HepG2 (cell line): ENCODE measurements at regions of chr3 and their contacts with region 1.

Region 1: DNA sequence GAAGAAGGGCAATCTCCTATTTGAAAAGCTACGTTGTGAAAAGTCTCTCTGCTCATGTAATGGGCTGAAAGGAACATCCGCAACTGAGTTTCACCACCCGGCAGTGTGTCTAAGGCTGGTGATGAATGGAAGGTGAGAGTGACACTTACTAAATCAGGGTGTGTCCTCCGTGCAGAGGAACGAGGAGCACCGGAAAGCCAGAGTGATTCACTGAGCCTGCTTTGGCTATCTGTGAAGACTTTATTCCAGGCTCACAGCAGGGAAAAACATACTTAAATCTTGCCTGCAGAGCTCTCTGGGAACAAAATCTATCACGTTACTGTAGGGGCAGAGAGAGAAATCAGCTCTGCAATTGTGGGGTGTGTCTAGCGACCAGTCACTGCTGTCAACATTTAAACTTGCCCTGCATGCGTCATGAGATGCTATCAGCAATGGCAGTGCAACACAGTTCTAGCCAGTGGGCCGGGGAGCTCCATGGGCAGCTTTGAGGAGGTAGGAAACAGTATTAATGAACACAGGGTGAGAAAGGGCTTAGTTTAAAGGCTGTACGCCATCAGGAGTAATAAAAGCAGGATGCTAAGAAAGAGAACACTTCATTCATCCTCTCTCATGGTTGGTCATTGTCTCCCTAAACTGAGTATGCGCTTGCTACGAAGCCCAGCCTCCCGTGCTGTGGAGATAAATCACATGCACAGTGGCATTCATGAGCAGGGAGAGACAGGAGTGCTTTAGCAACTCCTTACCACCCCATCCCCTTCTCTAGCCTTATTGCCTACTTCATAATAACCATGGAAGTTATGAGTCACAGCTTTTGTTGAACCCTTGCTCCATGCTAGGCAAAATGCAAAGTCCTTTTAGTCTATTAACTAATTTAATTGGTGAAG is 542.7 kb upstream of the ADAMTS9 start:
- DNase-seq: no peak
- ATAC-seq: no peak
- H3K4me3 ChIP-seq: no peak overlapping the region
- H3K27ac ChIP-seq: no peak overlapping the region
- H3K4me1 ChIP-seq: no peaks in the 10 kb centered on the region
- H3K27me3 ChIP-seq: no peaks in the 10 kb centered on the region; a peak in 1 of 5 replicates
- CTCF ChIP-seq: no peak
- EP300 ChIP-seq: no peak
- POLR2A ChIP-seq: no peak
- RAD21 ChIP-seq: no peak

Region 2: DNA sequence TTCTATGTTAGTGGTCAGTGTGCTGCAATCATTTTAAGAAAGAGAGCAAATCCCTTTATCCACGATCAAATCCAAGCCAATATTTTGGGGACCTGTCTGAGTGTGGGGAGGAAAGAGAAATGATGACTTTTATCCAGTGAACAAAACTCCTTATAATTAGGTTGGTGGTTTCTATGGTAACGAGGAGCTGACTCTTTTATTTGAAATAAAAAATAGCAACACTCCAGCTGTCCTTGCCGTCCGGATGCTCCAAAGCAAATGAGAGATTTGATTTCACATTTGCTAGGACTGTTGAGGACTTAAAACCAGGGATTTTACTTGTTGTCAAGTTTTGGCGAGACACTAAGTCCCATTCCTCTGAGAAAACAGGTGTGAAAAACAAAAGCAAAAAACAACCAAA is 851.3 kb before region 1 on chr3:
- CTCF ChIA-PET with region 1: no interaction called
- POLR2A ChIA-PET with region 1: no interaction called
- in situ Hi-C with region 1: no loop called
- intact Hi-C with region 1: no loop called
- DNase-seq: no peak
- ATAC-seq: no peak
- H3K4me3 ChIP-seq: no peak overlapping the region
- H3K27ac ChIP-seq: no peak overlapping the region
- H3K4me1 ChIP-seq: no peaks in the 10 kb centered on the region
- H3K27me3 ChIP-seq: peaks cover 0 to 6% of the 10 kb centered on the region in 2 experiments; a peak in 2 of 5 replicates
- CTCF ChIP-seq: no peak
- EP300 ChIP-seq: no peak
- POLR2A ChIP-seq: no peak
- RAD21 ChIP-seq: no peak

Region 3: GRCh38 chr3:64945171-64945729 is 285.2 kb before region 1 on chr3:
- CTCF ChIA-PET with region 1: no interaction called
- POLR2A ChIA-PET with region 1: no interaction called
- in situ Hi-C with region 1: no loop called
- intact Hi-C with region 1: no loop called
- DNase-seq: no peak
- ATAC-seq: no peak
- H3K4me3 ChIP-seq: no peak overlapping the region
- H3K27ac ChIP-seq: no peak overlapping the region
- H3K4me1 ChIP-seq: no peaks in the 10 kb centered on the region
- H3K27me3 ChIP-seq: no peaks in the 10 kb centered on the region
- CTCF ChIP-seq: no peak
- EP300 ChIP-seq: no peak
- POLR2A ChIP-seq: no peak
- RAD21 ChIP-seq: no peak

Region 4: GRCh38 chr3:65751123-65751700 is 520.7 kb after region 1 on chr3:
- CTCF ChIA-PET with region 1: no interaction called
- POLR2A ChIA-PET with region 1: no interaction called
- in situ Hi-C with region 1: no loop called
- intact Hi-C with region 1: loop called (anchors 5 kb)
- DNase-seq: peak; percentile 47
- ATAC-seq: peak; percentile 94
- H3K4me3 ChIP-seq: no peak overlapping the region
- H3K27ac ChIP-seq: no peak overlapping the region
- H3K4me1 ChIP-seq: no peaks in the 10 kb centered on the region
- H3K27me3 ChIP-seq: no peaks in the 10 kb centered on the region
- CTCF ChIP-seq: peak; percentile 77
- EP300 ChIP-seq: no peak
- POLR2A ChIP-seq: no peak
- RAD21 ChIP-seq: 0 out of 2 replicates have a peak, but pooled peaks have one; percentile 10